Common myeloid progenitor, CD34-positive (primary cell): ENCODE measurements at regions of chr1 and their contacts with region 1.

Region 1: DNA sequence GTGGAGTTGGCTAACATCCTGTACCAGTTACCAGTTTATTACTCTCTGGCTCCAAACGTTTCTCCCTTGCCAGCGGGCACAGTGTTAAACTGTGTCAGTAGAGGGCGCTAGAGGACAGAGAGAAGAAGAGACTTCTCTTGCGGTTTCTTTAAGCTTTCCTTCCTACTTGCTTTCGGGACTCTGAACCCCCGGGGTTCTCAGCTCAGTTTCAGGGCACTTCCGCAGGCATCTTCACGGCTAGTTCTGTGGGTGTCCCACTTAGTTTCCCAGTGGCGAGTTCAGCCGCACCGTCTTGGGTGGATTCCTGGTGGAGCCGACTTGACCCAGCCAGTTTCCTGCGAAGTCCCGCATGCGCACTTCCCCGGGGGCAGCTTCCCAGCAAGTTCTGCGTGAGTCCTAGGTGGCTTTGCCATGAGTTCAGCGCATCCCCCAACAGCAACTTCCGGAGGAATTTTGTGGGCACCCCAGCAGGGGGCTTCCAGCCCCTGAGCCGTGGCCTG is 37.9 kb upstream of the BTG2 start:
- DNase-seq: peak; percentile 85 to 92 (median 89)
- H3K4me3 ChIP-seq: peak overlapping the region; percentile 41 to 82 (median 72)
- H3K27ac ChIP-seq: peak overlapping the region in 1 of 2 experiments; percentile 43
- H3K4me1 ChIP-seq: peaks cover 0 to 28% (median 20%) of the 10 kb centered on the region in 4 experiments
- H3K27me3 ChIP-seq: no peaks in the 10 kb centered on the region

Region 2: GRCh38 chr1:203026031-203026989 is 241.1 kb before region 1 on chr1 and contains the start of gene PPFIA4:
- CTCF ChIA-PET with region 1: interaction called, 30 read pairs
- POLR2A ChIA-PET with region 1: no interaction called
- DNase-seq: peak; percentile 82 to 91 (median 89)
- H3K4me3 ChIP-seq: peak within 1 kb of the TSS in 6 of 7 experiments; percentile 58 to 83 (median 66)
- H3K27ac ChIP-seq: no peak within 1 kb of the TSS
- H3K4me1 ChIP-seq: peaks cover 0 to 14% (median 8%) of the 10 kb centered on the region in 4 experiments
- H3K27me3 ChIP-seq: peaks cover 3 to 24% (median 21%) of the 10 kb centered on the region in 5 experiments

Region 3: DNA sequence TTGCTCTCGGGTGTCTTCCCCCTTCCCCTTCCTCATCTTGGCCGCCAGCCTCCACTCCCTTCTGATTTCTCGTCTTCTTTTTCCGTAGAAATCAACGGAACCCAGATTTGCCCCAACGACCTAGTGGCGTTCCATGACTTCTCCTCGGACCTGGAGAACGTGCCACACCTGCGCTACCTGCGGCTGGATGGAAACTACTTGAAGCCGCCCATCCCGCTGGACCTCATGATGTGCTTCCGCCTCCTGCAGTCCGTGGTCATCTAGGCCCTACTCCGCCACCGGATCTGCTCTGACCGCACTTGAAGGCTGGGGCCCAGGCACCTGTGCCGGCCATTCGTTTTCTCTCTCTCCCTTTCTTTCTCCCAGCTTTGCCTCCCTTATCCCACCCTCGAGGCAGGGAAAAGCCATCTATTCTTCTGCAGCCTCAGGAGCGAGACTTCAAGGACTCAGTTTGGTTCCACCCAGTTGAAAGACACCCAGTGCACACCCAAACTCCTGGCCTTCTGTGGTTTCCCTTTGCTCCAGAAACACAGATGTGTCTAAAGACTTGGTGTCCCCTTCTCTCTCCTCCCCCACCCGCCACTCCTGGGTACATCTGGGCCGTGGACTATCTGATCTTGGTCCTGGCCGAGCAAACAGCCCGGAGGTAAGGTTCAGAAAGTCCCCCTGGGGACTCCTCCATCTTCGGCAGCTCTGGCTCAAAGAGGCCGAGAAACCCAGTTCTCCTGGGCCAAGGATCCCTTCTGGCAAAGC is 219.4 kb after region 1 on chr1:
- CTCF ChIA-PET with region 1: interaction called, 45 read pairs
- POLR2A ChIA-PET with region 1: interaction called, 3 read pairs
- DNase-seq: no peak
- H3K4me3 ChIP-seq: peak overlapping the region in 1 of 7 experiments; percentile 61
- H3K27ac ChIP-seq: no peak overlapping the region
- H3K4me1 ChIP-seq: peaks cover 0 to 9% (median 4%) of the 10 kb centered on the region in 4 experiments
- H3K27me3 ChIP-seq: no peaks in the 10 kb centered on the region